ENCODE measurements at regions of chr4 and their contacts with region 1.

Region 1: GRCh38 chr4:3480528-3481112 is 17.5 kb downstream of the DOK7 start:
- DNase-seq: peak; percentile 69
- H3K4me3 Mint-ChIP-seq: no peak overlapping the region
- H3K27ac Mint-ChIP-seq: no peak overlapping the region
- H3K4me1 Mint-ChIP-seq: no peaks in the 10 kb centered on the region
- H3K27me3 Mint-ChIP-seq: peaks cover 18% of the 10 kb centered on the region

Region 2: DNA sequence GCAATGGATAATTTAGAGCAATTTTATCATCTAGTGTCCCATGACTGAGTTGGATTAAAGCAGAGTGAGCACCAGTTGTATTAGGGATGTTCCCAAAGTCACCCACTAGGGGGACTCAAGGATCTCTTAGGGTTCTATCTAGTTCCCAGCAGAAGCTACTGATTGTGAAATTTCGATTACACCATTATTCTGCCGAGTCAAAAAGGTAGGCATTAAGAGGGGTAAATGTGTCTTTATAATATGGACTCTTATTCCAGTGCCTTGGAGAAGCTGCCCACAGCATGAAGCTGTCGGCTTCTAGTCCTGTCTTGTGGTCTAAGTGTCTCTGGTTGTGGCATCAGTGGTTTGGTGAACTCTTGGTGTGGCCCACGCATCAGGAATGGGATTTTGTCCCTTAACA is 134.5 kb before region 1 on chr4:
- intact Hi-C with region 1: loop called (anchors 1 kb)
- DNase-seq: no peak
- H3K4me3 Mint-ChIP-seq: no peak overlapping the region
- H3K27ac Mint-ChIP-seq: no peak overlapping the region
- H3K4me1 Mint-ChIP-seq: peaks cover 17% of the 10 kb centered on the region
- H3K27me3 Mint-ChIP-seq: peaks cover 6% of the 10 kb centered on the region

Region 3: DNA sequence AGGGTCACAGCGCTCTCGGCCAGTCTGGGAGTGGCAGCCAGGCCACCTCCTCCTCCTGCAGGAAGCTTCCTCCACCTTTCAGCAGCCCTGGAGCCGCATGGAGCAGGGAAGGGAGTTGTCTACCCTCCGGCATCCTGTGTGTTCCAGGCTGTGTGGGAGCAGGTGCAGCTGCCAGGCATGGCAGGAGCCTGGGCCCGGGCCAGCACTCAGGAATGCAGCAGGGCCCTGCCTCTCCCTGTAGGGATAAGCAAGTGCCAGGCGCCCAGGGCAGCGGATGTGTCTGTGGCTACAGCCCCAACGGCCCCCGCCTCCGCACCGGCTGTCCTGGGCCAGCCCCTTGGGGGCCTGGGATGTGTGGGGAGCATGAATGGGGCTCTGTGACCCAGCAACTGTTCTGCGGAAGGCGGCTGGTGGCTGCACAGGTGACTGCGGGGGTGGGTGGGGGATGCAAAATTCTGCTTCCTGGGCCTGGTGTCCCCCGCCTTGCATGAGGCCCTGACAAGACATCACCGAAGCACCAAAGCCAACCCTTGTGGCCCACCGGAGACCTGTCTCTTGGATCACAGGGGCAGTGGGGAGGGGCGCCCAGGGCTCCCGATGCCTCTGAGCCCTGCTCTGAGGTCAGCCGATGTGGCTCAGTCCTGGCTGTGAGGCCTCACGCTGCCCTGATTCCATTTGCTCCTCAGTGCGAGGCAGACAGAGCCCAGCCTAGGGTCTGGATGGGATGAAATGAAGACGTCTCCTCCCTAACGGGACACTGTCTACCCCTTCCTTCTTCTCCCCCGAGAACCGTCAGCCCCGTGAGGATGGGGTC is 18.9 kb before region 1 on chr4:
- intact Hi-C with region 1: no loop called
- DNase-seq: no peak
- H3K4me3 Mint-ChIP-seq: no peak overlapping the region
- H3K27ac Mint-ChIP-seq: no peak overlapping the region
- H3K4me1 Mint-ChIP-seq: no peaks in the 10 kb centered on the region
- H3K27me3 Mint-ChIP-seq: peaks cover 11% of the 10 kb centered on the region

Measured in activated T-helper 2 cell treated with anti-CD3 and anti-CD28 coated beads, Interferon-gamma antibody, Interleukin-2, Interleukin-4, amounts not matched to agents 10 μg/mL and 5 μg/mL and 100 μg/mL, durations not matched to agents 14 hours and 24 hours and 36 hours (primary cell).